ENCODE measurements at regions of chr17 and their contacts with region 1.

Region 1: DNA sequence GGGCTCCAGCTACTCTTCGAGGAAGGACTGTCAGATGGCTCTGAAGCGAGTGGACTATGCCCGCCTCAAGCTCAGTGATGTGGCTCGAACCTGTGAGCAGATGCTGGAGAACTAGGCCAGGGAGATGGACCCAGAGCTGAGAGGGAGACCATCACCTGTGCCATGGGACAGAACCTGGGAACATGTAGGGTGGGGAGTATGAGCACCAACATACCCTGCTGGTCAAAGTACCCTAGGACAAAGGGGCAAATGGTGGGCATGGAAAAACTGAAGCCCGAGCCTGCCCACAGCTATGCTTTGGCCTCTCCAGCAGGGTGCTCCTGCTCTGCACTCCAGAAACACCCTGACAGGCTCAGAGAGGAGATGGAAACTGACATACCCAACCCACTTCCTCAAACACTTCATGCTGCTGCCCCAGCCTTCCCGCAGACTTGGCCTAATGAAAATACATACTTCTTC is 1.9 kb downstream of the MED11 start:
- DNase-seq: peak; percentile 54
- H3K4me3 ChIP-seq: no peak overlapping the region
- H3K27ac ChIP-seq: no peak overlapping the region
- H3K4me1 ChIP-seq: peaks cover 24% of the 10 kb centered on the region
- CTCF ChIP-seq: peak; percentile 62

Region 2: GRCh38 chr17:4771519-4772234 is 38.6 kb after region 1 on chr17 and contains the start of gene TM4SF5:
- CTCF ChIA-PET with region 1: no interaction called
- POLR2A ChIA-PET with region 1: interaction called, 4 read pairs
- intact Hi-C with region 1: loop called (anchors 5 kb)
- DNase-seq: no peak
- H3K4me3 ChIP-seq: no peak within 1 kb of the TSS
- H3K27ac ChIP-seq: no peak within 1 kb of the TSS
- H3K4me1 ChIP-seq: peaks cover 14% of the 10 kb centered on the region
- CTCF ChIP-seq: no peak
- total RNA-seq, gene TM4SF5: not detected in 2 replicates

Region 3: DNA sequence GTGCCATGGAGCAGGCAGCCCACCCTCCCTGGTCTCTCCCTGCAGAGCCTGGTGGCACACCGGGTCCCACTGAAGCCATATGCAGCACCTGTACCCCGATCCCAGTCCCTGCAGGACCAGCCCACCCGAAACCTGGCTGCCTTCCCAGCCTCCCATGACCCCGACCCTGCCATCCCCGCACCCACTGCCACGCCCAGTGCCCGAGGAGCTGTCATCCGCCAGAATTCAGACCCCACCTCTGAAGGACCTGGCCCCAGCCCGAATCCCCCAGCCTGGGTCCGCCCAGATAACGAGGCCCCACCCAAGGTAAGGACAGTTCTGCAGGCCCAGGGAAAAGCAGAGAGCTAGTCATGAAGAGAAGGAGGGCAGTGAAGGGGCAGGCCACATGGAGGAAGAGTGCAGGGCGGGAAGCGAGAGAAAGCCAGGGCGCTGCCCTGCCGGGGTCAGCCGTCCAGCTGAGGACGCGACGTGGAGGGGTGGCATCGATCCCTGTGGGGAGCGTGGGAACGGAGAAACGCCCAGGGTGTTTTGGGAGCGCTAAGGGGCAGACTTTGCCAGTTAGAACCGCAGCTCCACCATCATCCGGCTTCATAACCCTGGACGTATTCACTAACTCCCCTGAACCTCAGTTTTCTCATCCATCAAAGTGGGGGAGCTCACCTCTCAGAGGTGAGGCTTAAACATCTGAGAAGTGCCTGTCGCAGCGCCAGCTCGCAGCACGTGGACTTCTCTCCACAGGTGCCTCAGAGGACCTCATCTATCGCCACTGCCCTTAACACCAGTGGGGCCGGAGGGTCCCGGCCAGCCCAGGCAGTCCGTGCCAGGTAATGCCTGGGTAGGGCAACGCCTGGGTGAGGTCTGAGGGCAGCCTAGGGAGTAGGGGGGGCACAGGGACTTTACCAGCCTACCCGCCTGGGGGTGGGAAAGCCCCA is 158.6 kb after region 1 on chr17:
- CTCF ChIA-PET with region 1: no interaction called
- POLR2A ChIA-PET with region 1: no interaction called
- intact Hi-C with region 1: loop called (anchors 2 kb)
- DNase-seq: no peak
- H3K4me3 ChIP-seq: no peak overlapping the region
- H3K27ac ChIP-seq: no peak overlapping the region
- H3K4me1 ChIP-seq: no peaks in the 10 kb centered on the region
- CTCF ChIP-seq: no peak